ENCODE measurements at regions of chr15 and their contacts with region 1.

Region 1: GRCh38 chr15:97009031-97009431 is 678.5 kb downstream of the NR2F2 start:
- DNase-seq: no peak
- H3K4me3 ChIP-seq: no peak overlapping the region
- H3K27ac ChIP-seq: no peak overlapping the region
- H3K4me1 ChIP-seq: no peaks in the 10 kb centered on the region
- H3K27me3 ChIP-seq: no peaks in the 10 kb centered on the region
- CTCF ChIP-seq: no peak

Region 2: DNA sequence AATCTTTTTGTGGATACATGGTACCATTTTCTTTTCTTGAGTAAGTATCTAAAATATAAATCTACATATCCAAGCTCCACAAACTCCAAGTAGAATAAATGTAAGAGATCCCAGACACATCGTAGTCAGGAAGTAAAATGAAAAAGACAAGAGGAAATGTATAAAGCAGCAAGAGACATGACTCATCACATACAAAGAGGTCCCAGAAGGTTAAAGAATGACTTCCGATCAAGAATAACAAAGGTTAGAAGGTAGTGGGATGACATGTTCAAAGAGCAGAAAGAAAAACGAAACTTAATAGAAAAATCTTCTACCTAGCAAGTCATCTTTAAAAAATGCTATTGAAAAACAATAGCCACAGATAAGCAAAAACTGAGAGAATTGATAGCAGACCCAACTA is 27.3 kb after region 1 on chr15:
- intact Hi-C with region 1: loop called (anchors 5 kb)
- DNase-seq: no peak
- H3K4me3 ChIP-seq: no peak overlapping the region
- H3K27ac ChIP-seq: no peak overlapping the region
- H3K4me1 ChIP-seq: no peaks in the 10 kb centered on the region
- H3K27me3 ChIP-seq: no peaks in the 10 kb centered on the region
- CTCF ChIP-seq: no peak

Measured in colonic mucosa (tissue), 4 donors.